Activated CD8-positive, alpha-beta T cell treated with anti-CD3 and anti-CD28 coated beads, Interleukin-2, amount 10 ng/mL, durations not matched to agents 7 days and 5 days (primary cell): ENCODE measurements at regions of chr5 and their contacts with region 1.

Region 1: DNA sequence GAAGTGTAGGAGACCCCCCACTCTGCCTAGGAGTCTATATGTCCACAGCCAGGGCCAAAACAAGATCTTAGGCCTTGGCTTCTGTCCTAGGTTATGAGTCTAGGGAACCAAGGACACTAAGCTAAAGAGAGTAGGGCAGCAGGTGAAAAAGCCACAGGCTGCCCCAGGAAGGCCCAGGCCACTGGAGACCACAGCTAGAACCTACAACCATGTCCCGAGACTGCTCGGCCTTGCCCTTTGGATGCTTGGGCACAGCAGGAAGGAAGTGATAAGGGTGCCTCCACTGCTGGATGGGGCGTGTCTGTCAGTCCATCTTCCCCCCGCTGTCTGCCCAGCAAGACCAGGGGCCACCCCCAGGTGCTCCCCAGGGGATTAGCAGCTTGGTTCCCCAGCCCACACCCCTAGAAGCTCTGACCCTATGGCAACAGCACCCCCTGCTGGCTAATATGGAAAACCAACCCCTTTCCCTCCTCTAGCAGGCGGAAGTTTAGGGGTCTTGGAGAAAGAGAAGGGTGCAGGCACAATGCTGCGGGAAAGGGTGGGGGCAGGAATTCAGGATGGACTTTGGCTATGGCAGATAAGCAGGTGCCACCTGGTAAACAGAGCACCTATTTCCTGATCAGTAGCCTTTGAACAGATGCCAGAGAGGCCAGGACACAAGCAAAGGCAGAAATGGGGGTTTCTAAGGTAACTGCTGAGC is 10.5 kb upstream of the IRF1 start:
- DNase-seq: peak; percentile 85
- ATAC-seq: peak; percentile 25
- H3K4me3 Mint-ChIP-seq: no peak overlapping the region
- H3K27ac Mint-ChIP-seq: peak overlapping the region; percentile 81
- H3K4me1 Mint-ChIP-seq: peaks cover 45% of the 10 kb centered on the region
- H3K27me3 Mint-ChIP-seq: peaks cover 5% of the 10 kb centered on the region

Region 2: DNA sequence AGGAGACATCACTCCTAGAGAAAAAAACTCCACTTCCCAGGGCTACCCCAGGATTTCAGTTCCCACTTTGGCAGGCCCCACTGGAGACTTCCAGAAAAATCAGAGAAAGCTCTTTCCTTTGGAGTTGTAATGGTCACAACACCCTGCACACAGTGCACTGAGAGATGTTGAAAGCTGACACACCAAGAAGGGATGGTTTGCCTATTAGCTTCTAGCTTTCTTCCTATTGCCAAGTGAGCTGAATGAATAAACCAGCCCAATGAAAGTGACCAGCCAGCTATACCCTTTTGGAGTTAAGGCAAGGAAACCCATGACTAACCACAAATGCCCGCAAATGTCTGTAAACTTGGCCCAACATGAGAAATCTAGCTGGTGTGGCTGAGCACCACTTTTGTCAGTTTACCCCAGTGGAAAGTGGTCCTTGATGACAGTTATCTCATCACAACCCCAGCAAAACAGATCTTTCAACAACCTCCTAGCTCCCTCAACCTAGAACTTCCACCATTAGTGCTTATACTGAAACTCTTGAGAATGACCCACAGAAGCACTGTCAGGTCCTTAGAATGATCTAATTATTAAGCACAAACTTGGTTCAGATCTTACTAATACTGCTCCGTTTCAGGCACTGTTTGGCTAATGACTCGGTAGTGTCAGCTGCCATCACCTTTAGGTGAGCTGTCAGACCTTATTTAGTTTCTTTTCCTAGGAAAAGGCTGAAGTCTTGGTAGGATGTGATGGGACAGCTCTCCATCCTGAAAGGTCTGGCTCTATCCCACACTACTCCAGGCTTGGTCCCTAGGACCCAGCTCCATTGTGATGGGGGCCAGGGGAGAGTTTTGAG is 21.8 kb before region 1 on chr5:
- CTCF ChIA-PET with region 1: interaction called, 12 read pairs
- POLR2A ChIA-PET with region 1: interaction called, 720 read pairs
- DNase-seq: no peak
- ATAC-seq: no peak
- H3K4me3 Mint-ChIP-seq: no peak overlapping the region
- H3K27ac Mint-ChIP-seq: peak overlapping the region; percentile 80
- H3K4me1 Mint-ChIP-seq: peaks cover 83% of the 10 kb centered on the region
- H3K27me3 Mint-ChIP-seq: no peaks in the 10 kb centered on the region